WTC11 (cell line): ENCODE measurements at regions of chr21 and their contacts with region 1.

Region 1: GRCh38 chr21:41612674-41613532 is 104.9 kb upstream of the TMPRSS2 start:
- DNase-seq: peak; percentile 79
- ATAC-seq: peak; percentile 82
- H3K4me3 Mint-ChIP-seq: peak overlapping the region; percentile 30
- H3K27ac Mint-ChIP-seq: peak overlapping the region; percentile 60
- H3K4me1 Mint-ChIP-seq: peaks cover 17% of the 10 kb centered on the region
- H3K27me3 Mint-ChIP-seq: peaks cover 6% of the 10 kb centered on the region
- CTCF ChIP-seq: peak; percentile 81

Region 2: GRCh38 chr21:41446571-41446970 is 166.3 kb before region 1 on chr21:
- CTCF ChIA-PET with region 1: no interaction called
- POLR2A ChIA-PET with region 1: no interaction called
- DNase-seq: no peak
- ATAC-seq: no peak
- H3K4me3 Mint-ChIP-seq: no peak overlapping the region
- H3K27ac Mint-ChIP-seq: no peak overlapping the region
- H3K4me1 Mint-ChIP-seq: peaks cover 3% of the 10 kb centered on the region; the same call in 1 of the 2 replicates
- H3K27me3 Mint-ChIP-seq: peaks cover 3% of the 10 kb centered on the region
- CTCF ChIP-seq: no peak

Region 3: DNA sequence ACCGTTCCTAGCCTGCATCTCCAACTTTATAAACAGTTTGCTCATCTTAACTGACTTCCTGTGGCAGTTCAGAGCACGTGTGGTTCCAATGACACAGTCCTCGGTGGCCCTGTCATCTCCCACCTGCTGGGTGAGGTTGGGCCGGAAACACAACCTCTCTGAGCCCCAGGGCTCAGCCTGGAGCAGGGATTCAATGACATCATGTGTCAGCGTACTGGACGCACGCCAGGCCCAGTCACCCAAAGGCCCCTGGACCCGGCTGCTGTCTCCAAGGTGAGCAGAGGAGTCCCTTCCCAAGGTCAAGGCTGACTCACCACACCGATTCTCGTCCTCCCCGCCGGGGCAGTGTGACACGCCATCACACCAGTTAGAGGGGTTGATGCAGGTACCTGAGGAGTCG is 124.8 kb before region 1 on chr21:
- CTCF ChIA-PET with region 1: no interaction called
- POLR2A ChIA-PET with region 1: no interaction called
- DNase-seq: no peak
- ATAC-seq: no peak
- H3K4me3 Mint-ChIP-seq: no peak overlapping the region
- H3K27ac Mint-ChIP-seq: no peak overlapping the region
- H3K4me1 Mint-ChIP-seq: peaks cover 9% of the 10 kb centered on the region; the same call in 1 of the 2 replicates
- H3K27me3 Mint-ChIP-seq: no peaks in the 10 kb centered on the region
- CTCF ChIP-seq: no peak

Region 4: DNA sequence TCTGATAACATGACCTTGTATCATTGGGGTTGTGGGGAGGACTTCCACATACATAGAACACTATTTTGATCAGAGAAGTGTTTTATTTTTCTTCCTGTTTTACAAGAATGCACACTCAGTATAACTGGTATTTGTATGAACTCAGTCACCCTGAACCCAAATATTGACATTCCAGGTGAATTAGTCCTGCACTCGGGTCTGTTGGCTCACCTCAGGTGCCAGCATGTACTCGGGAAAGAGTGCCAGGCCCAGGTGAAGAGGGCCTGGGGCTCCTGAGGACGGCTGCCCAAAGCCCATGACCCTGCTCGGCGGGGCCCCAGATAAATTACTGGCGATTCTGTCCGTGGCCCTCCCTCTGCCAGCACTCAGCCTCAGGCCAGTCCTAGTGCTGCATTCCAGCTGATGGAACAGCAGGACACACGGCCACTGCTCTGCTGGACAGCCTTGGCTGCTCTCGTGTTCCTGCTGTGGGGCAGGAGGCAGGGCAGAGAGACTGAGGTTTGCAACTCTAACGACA is 29.6 kb before region 1 on chr21:
- CTCF ChIA-PET with region 1: interaction called, 17 read pairs
- POLR2A ChIA-PET with region 1: no interaction called
- DNase-seq: no peak
- ATAC-seq: 0 out of 2 replicates have a peak, but pooled peaks have one; percentile 22
- H3K4me3 Mint-ChIP-seq: no peak overlapping the region
- H3K27ac Mint-ChIP-seq: no peak overlapping the region
- H3K4me1 Mint-ChIP-seq: no peaks in the 10 kb centered on the region; the same call in none of the 2 replicates
- H3K27me3 Mint-ChIP-seq: peaks cover 9% of the 10 kb centered on the region
- CTCF ChIP-seq: no peak

Region 5: DNA sequence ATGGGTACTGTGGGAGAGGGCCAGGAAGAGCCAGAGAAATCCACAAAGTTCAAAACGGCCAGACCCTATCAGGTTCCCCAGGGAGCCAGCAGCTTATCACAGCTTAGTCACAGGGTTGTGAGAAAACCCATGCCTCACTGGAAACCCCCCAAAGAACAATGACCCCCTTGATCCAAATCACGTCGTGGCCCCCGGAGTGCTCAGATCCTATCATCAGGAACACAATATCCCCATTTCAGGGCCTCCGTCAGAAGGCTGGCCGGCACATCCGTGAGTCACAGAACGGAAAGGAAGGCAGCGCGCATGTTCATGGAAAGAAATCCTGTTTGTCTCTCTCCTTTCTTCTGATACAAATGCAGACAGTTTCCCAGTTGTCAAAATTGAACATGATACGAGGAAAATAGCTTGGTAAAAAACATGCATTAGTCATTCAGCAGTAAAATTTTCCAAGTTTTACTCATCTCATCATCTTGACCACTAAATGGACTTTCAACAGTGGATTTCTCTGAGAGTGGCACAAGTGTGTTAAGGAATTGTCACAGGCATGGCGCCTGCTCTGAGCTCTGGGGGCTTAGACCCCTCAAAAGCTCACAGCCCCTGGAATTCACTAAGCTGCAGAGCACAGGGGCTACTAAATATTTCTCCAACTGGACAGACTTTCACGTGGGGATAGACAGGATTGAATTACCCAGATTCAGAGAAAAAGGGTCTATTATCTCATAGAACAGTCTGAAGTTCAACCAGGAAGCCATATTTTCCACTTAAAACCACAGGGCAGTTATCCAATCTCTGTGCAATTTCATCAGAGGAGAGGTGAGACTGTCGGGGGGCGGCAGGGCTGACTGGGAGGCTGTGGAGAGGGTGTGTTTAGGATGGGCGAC is 29.2 kb after region 1 on chr21:
- CTCF ChIA-PET with region 1: interaction called, 21 read pairs
- POLR2A ChIA-PET with region 1: no interaction called
- DNase-seq: no peak
- ATAC-seq: no peak
- H3K4me3 Mint-ChIP-seq: no peak overlapping the region
- H3K27ac Mint-ChIP-seq: no peak overlapping the region
- H3K4me1 Mint-ChIP-seq: no peaks in the 10 kb centered on the region
- H3K27me3 Mint-ChIP-seq: no peaks in the 10 kb centered on the region
- CTCF ChIP-seq: no peak

Region 6: DNA sequence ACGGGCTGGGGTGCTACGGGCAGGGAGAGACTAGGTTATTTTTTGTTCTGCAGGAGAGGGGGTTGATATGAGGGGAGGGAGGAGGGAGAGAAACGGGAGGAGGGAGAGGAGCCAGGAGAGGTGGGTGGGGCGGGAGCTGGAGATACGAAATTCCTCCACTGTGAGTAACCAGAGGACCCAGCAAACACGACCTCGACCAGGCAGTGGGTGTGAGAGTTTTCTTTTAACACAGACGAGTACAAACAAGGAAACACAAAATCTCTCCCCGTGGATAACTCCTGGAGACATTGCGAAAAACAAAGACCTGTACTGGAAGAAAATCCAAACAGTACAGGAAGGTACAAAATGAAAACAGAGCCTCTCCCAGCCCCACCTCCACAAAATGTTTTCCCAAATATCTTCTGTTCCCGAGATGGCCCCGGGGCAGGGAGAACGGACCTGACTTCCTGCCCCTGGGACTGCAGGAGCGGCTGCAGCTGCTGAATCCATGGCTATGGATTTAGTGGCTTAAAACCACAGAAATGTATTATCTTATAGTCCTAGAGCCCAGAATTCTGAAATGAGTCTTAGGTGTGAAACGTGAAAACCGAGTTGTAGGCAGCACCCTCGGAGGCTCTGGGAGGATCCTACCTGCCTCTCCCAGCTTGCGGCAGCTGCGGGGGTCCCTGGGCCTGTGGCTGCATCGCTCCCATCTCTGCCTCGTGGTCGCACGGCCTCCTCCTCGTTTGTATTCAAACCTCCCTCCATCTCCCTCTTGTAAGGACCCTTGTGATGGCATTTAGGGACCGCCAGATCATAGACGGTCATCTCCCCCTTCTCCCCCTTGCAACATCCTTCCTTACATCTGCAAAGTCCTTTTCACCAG is 71.7 kb after region 1 on chr21:
- CTCF ChIA-PET with region 1: interaction called, 10 read pairs
- POLR2A ChIA-PET with region 1: no interaction called
- DNase-seq: no peak
- ATAC-seq: peak; percentile 42
- H3K4me3 Mint-ChIP-seq: no peak overlapping the region
- H3K27ac Mint-ChIP-seq: peak overlapping the region; percentile 13; the same call in 1 of the 2 replicates
- H3K4me1 Mint-ChIP-seq: peaks cover 30% of the 10 kb centered on the region
- H3K27me3 Mint-ChIP-seq: no peaks in the 10 kb centered on the region; the same call in 1 of the 2 replicates
- CTCF ChIP-seq: no peak

Region 7: DNA sequence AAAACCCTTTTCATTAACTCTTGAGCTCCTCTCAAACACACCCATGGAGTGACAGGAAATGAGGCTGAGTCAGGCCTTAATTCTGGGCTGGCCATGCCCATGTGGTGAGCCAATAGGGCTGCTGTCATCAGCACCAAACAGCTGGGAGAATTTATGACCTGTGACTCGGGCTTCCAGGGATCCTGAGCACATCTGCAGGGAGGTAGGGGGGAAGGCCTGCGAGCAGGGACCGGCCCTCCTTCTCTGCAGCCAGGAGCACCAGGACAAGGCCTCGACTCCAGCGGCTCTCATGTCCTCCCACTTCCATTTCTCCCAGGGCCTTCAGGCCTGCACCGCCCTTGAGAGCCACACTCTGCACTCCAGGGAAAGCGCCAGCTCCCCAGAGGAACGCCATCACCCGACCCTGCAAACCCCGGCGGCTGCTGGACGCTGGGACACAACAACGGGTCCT is 139.4 kb after region 1 on chr21:
- CTCF ChIA-PET with region 1: interaction called, 49 read pairs
- POLR2A ChIA-PET with region 1: no interaction called
- DNase-seq: no peak
- ATAC-seq: no peak; the same call in 1 of the 2 replicates
- H3K4me3 Mint-ChIP-seq: no peak overlapping the region
- H3K27ac Mint-ChIP-seq: no peak overlapping the region
- H3K4me1 Mint-ChIP-seq: peaks cover 53% of the 10 kb centered on the region
- H3K27me3 Mint-ChIP-seq: no peaks in the 10 kb centered on the region; the same call in 1 of the 2 replicates
- CTCF ChIP-seq: no peak

Region 8: GRCh38 chr21:41802684-41803083 is 189.8 kb after region 1 on chr21:
- CTCF ChIA-PET with region 1: interaction called, 17 read pairs
- POLR2A ChIA-PET with region 1: interaction called, 3 read pairs
- DNase-seq: no peak
- ATAC-seq: no peak
- H3K4me3 Mint-ChIP-seq: no peak overlapping the region
- H3K27ac Mint-ChIP-seq: peak overlapping the region; percentile 45; the same call in 1 of the 2 replicates
- H3K4me1 Mint-ChIP-seq: no peaks in the 10 kb centered on the region
- H3K27me3 Mint-ChIP-seq: no peaks in the 10 kb centered on the region
- CTCF ChIP-seq: no peak

Region 9: GRCh38 chr21:41847066-41847804 is 234.3 kb after region 1 on chr21:
- CTCF ChIA-PET with region 1: interaction called, 31 read pairs
- POLR2A ChIA-PET with region 1: no interaction called
- DNase-seq: peak; percentile 52
- ATAC-seq: peak; percentile 76
- H3K4me3 Mint-ChIP-seq: no peak overlapping the region
- H3K27ac Mint-ChIP-seq: no peak overlapping the region
- H3K4me1 Mint-ChIP-seq: peaks cover 15% of the 10 kb centered on the region
- H3K27me3 Mint-ChIP-seq: no peaks in the 10 kb centered on the region
- CTCF ChIP-seq: no peak